K562 (cell line): ENCODE measurements at regions of chr22 and their contacts with region 1.

Region 1: DNA sequence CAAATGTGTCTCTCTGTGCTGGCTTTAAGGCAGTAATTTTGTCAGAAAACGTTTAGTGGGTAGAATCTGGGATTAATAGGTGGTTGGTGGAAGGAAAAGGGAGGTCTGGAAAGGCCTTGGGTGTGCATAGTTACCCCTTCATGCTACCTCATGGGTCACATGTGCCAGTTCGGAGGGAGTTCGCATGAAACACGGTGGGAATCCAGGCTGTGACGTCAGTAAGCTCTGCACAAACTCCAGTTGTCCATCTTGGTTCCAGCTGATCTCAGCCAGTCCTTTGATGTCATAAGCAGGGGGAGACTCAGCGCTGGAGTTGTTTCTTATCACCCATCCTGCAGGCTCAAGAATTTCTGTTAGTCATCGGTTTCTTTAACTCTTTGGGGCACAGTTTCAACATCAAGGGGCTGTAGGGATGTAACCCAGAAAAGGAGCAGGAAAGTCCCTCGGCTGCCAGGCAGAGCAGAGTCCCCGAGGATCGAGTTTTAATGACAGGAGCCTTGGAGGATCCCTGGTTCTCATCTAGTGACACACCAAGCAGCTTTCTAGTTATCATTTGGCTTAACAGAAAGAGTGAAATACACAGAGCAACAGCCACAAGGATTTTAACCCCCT is 28.9 kb downstream of the MOV10L1 start:
- DNase-seq: peak; percentile 87 to 95 (median 88)
- ATAC-seq: peak; percentile 88
- H3K4me3 ChIP-seq: no peak overlapping the region
- H3K27ac ChIP-seq: peak overlapping the region; percentile 94
- H3K4me1 ChIP-seq: peaks cover 33 to 35% of the 10 kb centered on the region in 2 experiments
- H3K27me3 ChIP-seq: no peaks in the 10 kb centered on the region
- CTCF ChIP-seq: no peak
- EP300 ChIP-seq: peak; percentile 93
- POLR2A ChIP-seq: peak; percentile 65
- RAD21 ChIP-seq: no peak

Region 2: DNA sequence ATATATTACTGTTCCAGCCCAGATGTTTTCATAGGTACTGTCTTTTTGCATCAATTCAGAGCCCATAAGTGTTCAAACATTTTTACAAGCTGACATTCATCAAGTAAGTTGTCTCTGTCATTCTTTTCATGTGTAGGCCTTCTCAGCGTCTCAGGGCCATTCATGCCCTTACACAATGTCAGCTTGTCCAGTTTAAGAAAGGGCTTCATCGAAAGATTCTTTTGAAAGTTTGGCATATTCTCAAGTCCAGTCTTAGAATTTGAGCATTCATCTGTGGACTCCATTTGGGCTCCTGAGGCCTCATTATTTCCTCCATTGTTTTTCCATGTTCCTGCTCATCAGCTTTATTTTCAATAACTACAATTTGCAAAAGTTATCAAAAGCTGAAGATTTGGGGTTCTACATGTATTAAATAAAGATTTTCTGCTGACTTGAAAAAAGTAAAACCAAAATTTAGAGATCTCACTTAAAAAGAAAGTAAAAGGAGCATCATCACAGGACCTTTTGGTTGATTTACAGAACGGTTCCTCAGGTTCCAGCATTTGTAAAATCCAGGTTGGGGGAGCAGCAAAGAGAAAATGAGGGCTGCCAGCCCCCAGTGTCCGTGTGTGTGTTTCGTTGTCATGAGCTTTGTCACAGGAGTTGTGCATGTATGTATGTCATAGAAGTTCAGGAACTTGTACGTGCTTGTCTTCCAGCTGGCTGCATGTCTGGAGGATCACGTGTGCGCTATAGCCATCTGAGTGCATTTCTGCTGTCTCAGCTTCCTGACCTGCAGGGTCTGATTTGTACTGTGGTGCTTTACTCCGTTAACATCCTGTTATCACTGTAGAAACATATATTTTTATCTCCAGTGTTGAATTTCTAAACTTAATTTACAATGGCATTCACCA is 13.2 kb before region 1 on chr22:
- CTCF ChIA-PET with region 1: no interaction called
- POLR2A ChIA-PET with region 1: interaction called, 26 read pairs
- in situ Hi-C with region 1: no loop called
- intact Hi-C with region 1: no loop called
- DNase-seq: peak in 2 of 4 experiments; percentile 38 to 64
- ATAC-seq: peak; percentile 80
- H3K4me3 ChIP-seq: no peak overlapping the region
- H3K27ac ChIP-seq: peak overlapping the region; percentile 32; the same call in 1 of the 3 replicates
- H3K4me1 ChIP-seq: peaks cover 16 to 18% of the 10 kb centered on the region in 2 experiments; a peak in 3 of 5 replicates
- H3K27me3 ChIP-seq: no peaks in the 10 kb centered on the region
- CTCF ChIP-seq: no peak
- EP300 ChIP-seq: no peak
- POLR2A ChIP-seq: no peak
- RAD21 ChIP-seq: no peak